Mammary epithelial cell (primary cell): ENCODE measurements at regions of chr15 and their contacts with region 1.

Region 1: GRCh38 chr15:40564591-40565332 is at the start of gene CCDC32:
- DNase-seq: peak; percentile 99
- H3K4me3 ChIP-seq: peak within 1 kb of the TSS; percentile 72 to 91 (median 85)
- H3K27ac ChIP-seq: peak within 1 kb of the TSS; percentile 81
- H3K4me1 ChIP-seq: peaks cover 13% of the 10 kb centered on the region
- H3K27me3 ChIP-seq: no peaks in the 10 kb centered on the region
- CTCF ChIP-seq: no peak
- total RNA-seq, gene CCDC32: 17.3 to 25.8 TPM

Region 2: GRCh38 chr15:40500584-40501330 is 64.0 kb before region 1 on chr15:
- CTCF ChIA-PET with region 1: no interaction called
- dilution Hi-C with region 1: loop called (anchors 5 kb)
- in situ Hi-C with region 1: no loop called
- intact Hi-C with region 1: no loop called
- DNase-seq: peak; percentile 29
- H3K4me3 ChIP-seq: no peak overlapping the region
- H3K27ac ChIP-seq: no peak overlapping the region
- H3K4me1 ChIP-seq: peaks cover 11% of the 10 kb centered on the region
- H3K27me3 ChIP-seq: no peaks in the 10 kb centered on the region
- CTCF ChIP-seq: no peak

Region 3: DNA sequence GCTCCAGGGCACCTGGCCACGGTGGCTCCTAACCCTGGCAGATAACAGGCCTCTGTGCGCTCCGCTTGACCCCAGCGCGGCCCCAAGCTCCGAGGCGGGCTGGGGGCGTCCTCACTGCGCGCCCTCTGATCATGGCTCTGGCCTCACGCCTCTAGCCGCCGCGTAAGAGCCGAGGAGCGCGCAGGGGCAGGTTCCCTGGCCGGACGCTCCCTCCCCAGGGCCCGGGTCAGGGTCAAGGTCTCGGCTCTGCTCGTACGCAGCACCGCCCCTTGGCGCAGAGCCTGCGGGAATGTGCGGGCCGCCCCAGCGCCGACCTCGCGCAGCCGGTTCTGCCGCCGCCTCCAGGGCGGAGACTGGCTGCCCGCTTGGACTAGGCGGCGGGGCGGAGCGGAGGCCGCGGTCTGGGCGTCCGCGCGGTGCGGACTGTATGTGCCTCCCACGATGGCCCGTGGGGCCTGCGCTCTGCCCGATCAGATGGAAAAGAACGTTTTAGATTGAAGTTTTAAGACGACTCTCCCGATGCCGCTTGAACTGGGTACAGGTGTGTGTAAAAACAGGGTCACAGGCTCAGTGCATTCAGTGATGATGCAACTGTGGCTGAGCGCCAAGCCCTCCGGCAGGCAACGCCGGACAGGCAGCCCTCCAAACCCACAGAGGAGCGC is 53.2 kb before region 1 on chr15:
- CTCF ChIA-PET with region 1: no interaction called
- dilution Hi-C with region 1: no loop called
- in situ Hi-C with region 1: no loop called
- intact Hi-C with region 1: no loop called
- DNase-seq: peak; percentile 40
- H3K4me3 ChIP-seq: peak overlapping the region; percentile 22 to 60 (median 43)
- H3K27ac ChIP-seq: no peak overlapping the region
- H3K4me1 ChIP-seq: peaks cover 25% of the 10 kb centered on the region
- H3K27me3 ChIP-seq: no peaks in the 10 kb centered on the region
- CTCF ChIP-seq: no peak